ENCODE measurements at regions of chr18 and their contacts with region 1.

Region 1: GRCh38 chr18:9827641-9828505 is 57.9 kb upstream of the TXNDC2 start:
- DNase-seq: peak; percentile 86 to 97
- H3K4me3 ChIP-seq: peak overlapping the region; percentile 1; the same call in 1 of the 2 replicates
- H3K27ac ChIP-seq: peak overlapping the region; percentile 93
- H3K4me1 ChIP-seq: peaks cover 60% of the 10 kb centered on the region
- H3K27me3 ChIP-seq: no peaks in the 10 kb centered on the region
- CTCF ChIP-seq: no peak

Region 2: DNA sequence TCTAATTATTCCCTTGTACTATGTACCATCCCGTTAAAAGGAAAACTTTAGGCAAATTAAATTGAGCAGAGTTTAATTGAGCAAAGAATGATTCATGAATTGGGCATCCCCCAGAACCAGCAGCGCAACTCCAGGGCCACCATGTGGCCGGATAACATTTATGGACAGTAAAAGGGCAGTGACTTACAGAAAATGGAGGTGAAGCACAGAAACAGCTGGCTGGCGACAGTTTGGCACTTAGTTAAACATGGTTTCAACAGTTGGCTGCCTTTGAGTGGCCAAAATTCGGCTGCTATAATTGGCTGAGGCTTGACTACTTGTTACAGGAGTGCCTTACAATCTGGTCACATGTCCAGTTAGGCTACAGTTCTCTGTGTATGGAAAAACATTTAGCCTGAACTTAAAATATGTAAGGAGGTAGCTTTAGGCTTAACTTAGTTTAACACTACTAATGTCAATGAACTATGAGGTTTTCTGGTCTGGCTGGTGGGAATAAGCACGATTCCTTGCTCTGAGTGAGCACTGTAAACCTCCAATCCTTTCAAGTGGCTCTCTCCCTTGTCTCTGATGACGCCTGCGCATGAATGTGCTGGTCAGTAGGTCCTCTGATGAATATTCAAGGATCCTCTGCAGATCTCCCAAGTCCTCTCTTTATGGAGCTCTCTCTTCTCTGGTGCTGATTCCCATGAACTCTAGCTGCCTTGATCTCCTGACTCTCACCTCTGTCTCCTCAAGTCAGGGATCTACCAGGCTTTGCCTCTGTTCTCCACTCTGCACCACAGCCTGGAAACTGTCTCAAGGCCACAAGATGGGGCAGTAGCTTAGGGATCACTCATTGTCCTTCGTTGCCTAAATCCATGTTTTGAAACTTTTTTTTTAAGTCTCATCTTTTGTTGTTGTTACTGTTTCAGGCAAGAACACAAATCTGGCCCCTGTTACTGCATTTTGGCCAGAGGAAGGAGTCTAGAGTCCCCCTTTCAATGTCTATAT is 144.2 kb before region 1 on chr18:
- CTCF ChIA-PET with region 1: no interaction called
- POLR2A ChIA-PET with region 1: interaction called, 3 read pairs
- intact Hi-C with region 1: loop called (anchors 5 kb)
- DNase-seq: peak; percentile 75 to 76
- H3K4me3 ChIP-seq: peak overlapping the region; percentile 15; the same call in 1 of the 2 replicates
- H3K27ac ChIP-seq: peak overlapping the region; percentile 56
- H3K4me1 ChIP-seq: peaks cover 32% of the 10 kb centered on the region
- H3K27me3 ChIP-seq: no peaks in the 10 kb centered on the region
- CTCF ChIP-seq: peak; percentile 62

Region 3: DNA sequence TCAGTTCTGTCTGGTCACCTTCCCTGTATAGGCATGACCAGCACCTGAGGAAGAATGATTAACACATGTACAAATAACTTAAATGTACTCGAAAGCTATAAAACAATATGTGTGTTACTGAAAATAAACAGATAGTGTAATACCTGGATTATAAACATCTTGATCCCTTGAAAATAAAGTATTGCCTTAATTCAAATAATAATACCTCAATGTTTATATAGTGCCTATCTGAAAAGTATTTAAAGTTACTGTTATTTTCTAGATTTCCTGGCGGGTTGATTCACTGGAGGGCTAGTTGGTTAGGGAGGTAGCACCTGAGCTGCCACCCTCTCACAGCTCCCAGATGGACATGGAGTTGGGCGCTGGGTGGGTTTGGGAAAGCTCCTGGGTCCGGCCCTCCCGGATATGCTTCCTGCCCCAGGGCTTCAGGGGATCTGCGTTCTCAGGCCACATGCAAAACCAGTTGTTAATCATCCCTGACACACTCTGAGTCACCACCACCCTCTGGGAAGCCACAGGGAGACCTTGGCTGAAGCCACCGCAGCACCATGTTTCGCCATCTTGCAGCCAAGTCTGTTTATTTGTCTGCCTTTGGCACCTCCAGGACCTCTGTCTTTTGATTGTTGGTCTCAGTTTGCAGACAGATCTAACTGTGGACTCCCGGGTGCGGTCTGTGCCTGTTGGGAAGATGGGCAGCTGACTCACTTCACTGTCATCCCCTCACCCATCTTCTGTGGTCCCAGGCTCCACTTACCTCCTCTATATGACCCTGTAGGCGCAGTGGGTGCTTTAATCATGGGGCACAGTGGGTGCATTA is 84.5 kb before region 1 on chr18:
- CTCF ChIA-PET with region 1: no interaction called
- POLR2A ChIA-PET with region 1: no interaction called
- intact Hi-C with region 1: loop called (anchors 2 kb)
- DNase-seq: peak; percentile 94 to 96
- H3K4me3 ChIP-seq: peak overlapping the region; percentile 27
- H3K27ac ChIP-seq: peak overlapping the region; percentile 96
- H3K4me1 ChIP-seq: peaks cover 59% of the 10 kb centered on the region
- H3K27me3 ChIP-seq: no peaks in the 10 kb centered on the region
- CTCF ChIP-seq: no peak

Region 4: DNA sequence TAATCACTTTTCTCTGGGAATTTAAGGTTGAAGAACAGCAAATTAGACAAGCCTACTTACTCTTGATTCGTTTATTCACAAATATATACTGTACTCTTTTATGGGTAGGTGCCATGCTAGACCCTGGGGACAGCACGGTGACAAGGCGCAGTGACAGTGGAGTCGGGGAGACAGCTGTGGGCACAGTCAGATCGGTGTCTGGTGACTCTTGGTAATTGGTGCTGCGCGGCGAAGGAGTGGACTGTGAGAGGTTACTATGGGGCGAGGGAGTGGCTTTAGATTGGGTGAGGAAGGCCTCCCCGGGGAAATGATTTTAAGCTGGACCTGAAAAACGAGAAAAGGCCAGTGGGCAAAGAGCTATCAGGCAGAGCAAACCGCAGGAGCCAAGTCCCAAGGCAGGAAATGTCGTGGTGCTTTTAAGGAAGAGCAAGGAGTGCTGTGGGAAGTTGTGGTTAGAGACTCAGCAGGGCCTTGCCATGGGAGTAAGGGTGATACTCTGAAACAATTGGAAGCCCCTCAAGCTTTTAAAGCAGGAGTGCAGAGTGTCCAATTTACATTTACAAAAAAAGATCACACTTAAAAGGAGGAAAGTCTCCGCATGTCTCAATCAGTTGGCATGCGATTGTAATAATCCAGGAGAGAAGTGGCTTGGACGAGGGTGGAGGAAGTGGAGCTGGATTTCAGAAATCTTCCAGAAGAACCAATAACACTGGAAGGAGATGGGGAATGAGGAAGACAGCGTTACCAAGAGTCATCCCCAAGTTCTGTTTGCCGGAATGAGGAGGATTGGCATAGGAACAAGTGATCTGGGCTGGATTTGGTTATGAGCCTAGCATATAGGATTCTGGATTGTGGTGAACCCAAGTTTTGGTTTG is 21.8 kb after region 1 on chr18:
- CTCF ChIA-PET with region 1: no interaction called
- POLR2A ChIA-PET with region 1: interaction called, 27 read pairs
- intact Hi-C with region 1: loop called (anchors 1 kb)
- DNase-seq: peak; percentile 92 to 98
- H3K4me3 ChIP-seq: peak overlapping the region; percentile 44; the same call in 1 of the 2 replicates
- H3K27ac ChIP-seq: peak overlapping the region; percentile 96
- H3K4me1 ChIP-seq: peaks cover 51% of the 10 kb centered on the region
- H3K27me3 ChIP-seq: no peaks in the 10 kb centered on the region
- CTCF ChIP-seq: no peak

Region 5: DNA sequence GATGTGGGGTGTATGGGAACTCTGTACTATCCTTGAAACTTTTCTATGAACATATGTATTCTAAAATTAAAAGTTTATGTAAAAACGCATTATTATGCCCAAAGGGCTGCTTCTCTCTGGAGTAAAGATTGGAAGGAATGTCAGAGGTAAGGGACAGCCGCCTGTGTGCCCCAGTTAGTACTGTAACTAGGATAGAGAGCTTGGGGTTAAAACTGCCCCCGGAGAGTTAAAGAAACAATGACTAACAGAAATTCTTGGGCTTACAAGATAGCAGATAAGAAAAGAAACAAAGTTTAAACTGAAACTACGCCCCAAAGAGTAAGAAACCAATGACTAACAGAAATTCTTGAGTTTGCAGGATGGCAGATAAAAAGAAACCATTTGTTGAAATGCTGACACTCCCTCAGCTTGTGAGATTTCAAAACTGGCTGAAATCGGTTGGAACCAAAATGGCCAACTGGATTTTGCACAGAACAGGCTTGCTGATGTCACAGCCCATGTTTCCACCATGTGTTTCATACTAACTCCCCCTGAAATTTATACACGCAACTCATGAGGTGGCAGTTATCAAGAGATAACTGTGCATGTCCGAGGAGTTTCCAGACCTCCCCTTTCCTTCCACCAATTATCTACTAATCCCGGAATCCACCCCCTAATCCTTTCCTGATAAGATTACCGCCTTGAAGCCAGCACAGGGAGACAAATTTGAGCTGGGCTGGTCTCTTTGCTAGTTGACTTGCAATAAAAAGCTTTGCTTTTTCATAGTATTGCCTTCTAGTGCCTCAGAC is 49.2 kb after region 1 on chr18:
- CTCF ChIA-PET with region 1: no interaction called
- POLR2A ChIA-PET with region 1: no interaction called
- intact Hi-C with region 1: loop called (anchors 2 kb)
- DNase-seq: peak; percentile 57 to 96
- H3K4me3 ChIP-seq: peak overlapping the region; percentile 52
- H3K27ac ChIP-seq: peak overlapping the region; percentile 97
- H3K4me1 ChIP-seq: peaks cover 34% of the 10 kb centered on the region
- H3K27me3 ChIP-seq: no peaks in the 10 kb centered on the region
- CTCF ChIP-seq: no peak

Region 6: DNA sequence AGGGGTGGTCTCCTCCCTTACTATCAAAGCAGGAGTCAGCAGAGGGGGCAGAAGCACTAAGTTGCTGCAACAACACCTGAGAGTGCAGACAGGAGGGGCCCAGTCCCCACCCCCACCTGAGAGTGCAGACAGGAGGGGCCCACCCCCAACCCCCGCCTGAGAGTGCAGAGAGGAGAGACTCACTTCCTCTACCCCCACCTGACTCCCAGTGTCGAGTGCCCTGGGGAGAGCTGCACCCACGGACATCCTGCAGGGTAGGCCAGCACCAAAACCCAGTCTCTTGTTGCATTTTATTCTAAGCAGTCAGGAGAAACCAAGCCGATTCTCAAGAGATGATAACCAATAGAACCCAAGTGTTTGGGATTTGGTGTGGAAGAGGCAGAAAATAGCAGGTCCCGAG is 776.3 kb after region 1 on chr18:
- CTCF ChIA-PET with region 1: no interaction called
- POLR2A ChIA-PET with region 1: no interaction called
- intact Hi-C with region 1: no loop called
- DNase-seq: no peak
- H3K4me3 ChIP-seq: no peak overlapping the region
- H3K27ac ChIP-seq: no peak overlapping the region
- H3K4me1 ChIP-seq: no peaks in the 10 kb centered on the region
- H3K27me3 ChIP-seq: peaks cover 9% of the 10 kb centered on the region; the same call in 1 of the 2 replicates
- CTCF ChIP-seq: no peak

Measured in PC-9 (cell line).